Activated T-helper 1 cell treated with anti-CD3 and anti-CD28 coated beads, Interleukin-12 subunit alpha, Interleukin-12 subunit beta, Interleukin-2, Interleukin-4 antibody, amounts not matched to agents 30 ng/mL and 10 ng/mL and 1 ng/mL, durations not matched to agents 14 hours and 24 hours and 36 hours (primary cell): ENCODE measurements at regions of chr7 and their contacts with region 1.

Region 1: DNA sequence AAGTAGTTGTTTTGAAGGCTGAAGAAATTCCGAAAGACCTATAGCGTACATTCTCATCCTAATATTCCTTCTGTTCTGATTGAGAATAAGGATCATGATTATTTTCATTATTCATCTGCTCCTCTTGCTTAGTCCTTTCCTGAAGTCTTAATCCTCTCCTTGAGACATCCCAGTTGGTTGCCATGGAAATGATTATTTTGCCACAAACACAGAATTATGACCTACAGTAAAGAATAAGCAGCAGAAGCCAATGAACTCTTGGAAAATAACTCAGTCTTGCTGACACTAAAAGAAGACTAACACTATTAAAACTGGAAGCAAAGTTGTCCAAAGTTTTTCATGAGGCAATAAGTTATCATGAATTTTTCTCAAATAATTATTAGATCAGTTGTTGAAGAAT is 47.8 kb upstream of the JAZF1 start:
- DNase-seq: no peak
- H3K4me3 Mint-ChIP-seq: no peak overlapping the region
- H3K27ac Mint-ChIP-seq: no peak overlapping the region
- H3K4me1 Mint-ChIP-seq: no peaks in the 10 kb centered on the region
- H3K27me3 Mint-ChIP-seq: peaks cover 25% of the 10 kb centered on the region

Region 2: GRCh38 chr7:27873981-27874957 is 354.1 kb before region 1 on chr7:
- intact Hi-C with region 1: no loop called
- DNase-seq: no peak
- H3K4me3 Mint-ChIP-seq: no peak overlapping the region
- H3K27ac Mint-ChIP-seq: no peak overlapping the region
- H3K4me1 Mint-ChIP-seq: no peaks in the 10 kb centered on the region
- H3K27me3 Mint-ChIP-seq: peaks cover 6% of the 10 kb centered on the region

Region 3: DNA sequence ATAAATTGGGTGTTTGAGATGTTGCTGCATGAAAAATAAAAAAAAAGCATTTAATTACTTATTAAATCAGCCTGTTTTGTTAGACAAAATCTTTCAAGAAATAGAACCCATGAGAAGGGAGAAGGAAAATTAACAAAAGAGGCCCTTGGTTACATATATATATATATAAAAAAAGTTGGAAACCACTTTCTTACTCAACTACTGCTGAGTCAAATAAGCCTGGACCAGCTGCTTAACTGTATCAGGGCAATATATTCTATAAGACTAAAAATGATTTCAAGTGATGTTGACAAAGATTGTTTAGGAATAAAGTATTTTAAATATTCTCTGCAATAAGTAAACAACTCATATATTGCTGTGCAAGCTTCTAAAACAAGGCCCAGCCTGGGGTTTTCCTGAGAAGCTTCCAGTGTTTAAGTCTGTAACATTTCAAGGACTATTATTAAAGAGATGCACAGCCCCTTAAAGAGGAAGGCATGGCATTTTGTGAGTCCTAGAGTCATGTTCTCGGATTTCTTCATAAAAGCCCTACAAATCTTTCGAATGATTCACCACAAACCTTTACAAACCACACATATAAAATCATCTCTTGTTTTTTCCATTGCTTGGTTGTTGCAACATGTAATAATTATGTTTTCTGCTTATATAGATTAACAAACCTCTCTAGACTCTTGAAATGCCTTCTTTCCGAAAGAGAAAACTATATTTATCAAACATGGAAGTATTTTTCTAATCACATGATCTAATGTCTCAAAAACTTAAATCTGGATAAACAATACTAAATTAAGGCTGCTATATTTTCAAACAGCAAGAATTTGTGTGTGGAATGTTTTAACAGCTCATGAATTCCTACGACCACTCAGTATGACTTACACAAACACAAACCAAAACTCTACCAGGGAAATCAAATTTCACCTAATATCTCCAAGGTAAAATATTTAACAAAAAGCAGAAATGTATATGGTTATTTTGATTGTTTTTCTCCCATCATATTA is 62.1 kb before region 1 on chr7:
- intact Hi-C with region 1: no loop called
- DNase-seq: no peak
- H3K4me3 Mint-ChIP-seq: no peak overlapping the region
- H3K27ac Mint-ChIP-seq: no peak overlapping the region
- H3K4me1 Mint-ChIP-seq: peaks cover 22% of the 10 kb centered on the region
- H3K27me3 Mint-ChIP-seq: no peaks in the 10 kb centered on the region

Region 4: DNA sequence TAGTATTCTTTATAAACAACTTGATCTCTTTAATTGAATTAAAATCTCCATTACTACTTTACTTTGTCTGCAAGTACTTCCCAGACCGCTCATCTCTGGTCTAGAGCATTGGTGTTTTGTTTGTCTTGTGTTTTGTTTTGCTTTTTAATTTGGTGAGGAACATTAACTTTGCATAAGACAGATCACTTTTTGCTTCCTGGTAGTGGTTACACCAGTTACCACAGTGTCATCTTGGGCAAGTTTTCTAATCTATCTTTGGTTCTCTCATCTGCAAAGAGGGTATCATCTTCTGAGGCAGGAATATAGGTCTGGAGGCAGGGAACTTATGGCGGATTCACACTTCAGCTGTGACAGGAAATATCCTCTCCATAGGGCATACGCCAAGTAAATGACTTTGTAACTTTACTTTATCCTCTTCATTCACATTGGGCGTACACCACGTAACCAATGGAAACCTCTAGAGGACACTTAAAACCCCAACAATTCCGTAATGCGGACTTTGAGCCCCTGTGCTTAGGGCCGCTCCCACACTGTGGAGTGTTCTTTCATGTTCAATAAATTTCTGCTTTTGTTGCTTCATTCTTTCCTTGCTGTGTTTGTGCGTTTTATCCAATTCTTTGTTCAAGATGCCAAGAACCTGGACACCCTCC is 35.4 kb after region 1 on chr7:
- intact Hi-C with region 1: loop called (anchors 2 kb)
- DNase-seq: no peak
- H3K4me3 Mint-ChIP-seq: no peak overlapping the region
- H3K27ac Mint-ChIP-seq: no peak overlapping the region
- H3K4me1 Mint-ChIP-seq: no peaks in the 10 kb centered on the region
- H3K27me3 Mint-ChIP-seq: peaks cover 26% of the 10 kb centered on the region